HepG2 (cell line): ENCODE measurements at regions of chr2 and their contacts with region 1.

Region 1: DNA sequence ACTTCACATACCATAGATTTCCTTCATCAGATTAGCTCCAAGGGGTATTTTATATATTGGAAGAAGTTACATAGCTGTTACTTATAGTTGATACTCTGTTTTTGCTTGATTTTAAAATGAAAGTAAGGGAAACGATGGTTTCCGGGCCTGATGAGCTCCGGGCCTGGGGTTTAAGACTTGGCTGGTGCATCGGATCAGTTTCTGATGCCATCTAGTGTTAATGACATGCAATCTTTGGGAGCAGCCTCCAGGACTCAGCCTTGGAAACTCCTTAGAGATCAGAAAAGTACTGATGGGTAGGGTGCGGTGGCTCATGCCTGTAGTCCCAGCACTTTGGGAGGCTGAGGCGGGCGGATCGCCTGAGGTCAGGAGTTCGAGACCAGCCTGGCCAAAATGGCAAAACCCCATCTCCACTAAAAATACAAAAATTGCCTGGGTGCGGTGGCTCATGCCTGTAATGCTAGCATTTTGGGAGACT is 47.1 kb upstream of the CNOT11 start:
- DNase-seq: peak; percentile 83
- ATAC-seq: peak; percentile 72
- H3K4me3 ChIP-seq: peak overlapping the region; percentile 54 to 66 (median 55)
- H3K27ac ChIP-seq: peak overlapping the region; percentile 30
- H3K4me1 ChIP-seq: peaks cover 51% of the 10 kb centered on the region
- H3K27me3 ChIP-seq: no peaks in the 10 kb centered on the region
- CTCF ChIP-seq: peak; percentile 88
- EP300 ChIP-seq: no peak
- POLR2A ChIP-seq: no peak
- RAD21 ChIP-seq: peak; percentile 75

Region 2: DNA sequence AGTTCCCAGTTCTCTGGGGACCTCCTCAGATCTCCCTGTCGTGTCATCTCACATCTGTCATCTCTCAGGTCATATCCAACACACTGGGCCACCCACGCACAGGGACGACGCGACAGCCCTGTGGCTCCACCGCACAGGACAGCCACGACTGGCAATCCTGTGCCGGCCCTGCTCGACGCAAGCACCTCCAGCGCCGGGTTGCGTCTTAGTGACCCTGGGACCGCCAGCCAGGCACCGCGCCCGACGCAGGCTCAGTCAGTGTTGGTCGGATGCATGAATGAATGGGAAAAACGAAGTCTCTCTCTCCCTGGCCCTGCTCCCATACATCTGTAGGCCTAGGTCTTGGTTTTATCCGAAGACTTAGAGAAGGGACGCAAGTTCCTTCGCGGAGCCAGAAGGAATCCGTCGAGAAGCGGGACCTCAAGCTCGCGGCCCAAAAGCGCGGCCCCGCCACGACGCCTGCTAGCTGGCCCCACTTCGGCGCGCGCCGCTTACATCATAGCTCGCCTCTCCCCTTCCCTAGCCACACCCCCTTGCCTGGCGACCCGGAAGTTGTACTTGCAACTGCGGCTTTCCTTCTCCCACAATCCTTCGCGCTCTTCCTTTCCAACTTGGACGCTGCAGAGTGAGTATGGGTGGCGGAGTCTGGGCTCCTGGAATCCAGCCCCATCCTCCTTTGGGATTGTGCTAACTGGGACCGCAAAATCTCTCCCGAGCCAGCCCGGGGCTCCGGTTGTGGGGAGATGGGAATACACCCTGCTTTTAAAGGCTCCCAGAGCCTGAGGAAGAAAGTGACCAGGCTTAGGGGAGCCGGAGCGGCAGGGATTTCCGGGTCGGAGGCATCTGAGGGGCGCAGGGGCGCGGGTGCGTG is 203.6 kb before region 1 on chr2 and contains the start of gene RPL31:
- CTCF ChIA-PET with region 1: no interaction called
- POLR2A ChIA-PET with region 1: interaction called, 12 read pairs
- in situ Hi-C with region 1: no loop called
- intact Hi-C with region 1: no loop called
- DNase-seq: peak; percentile 98
- ATAC-seq: peak; percentile 91
- H3K4me3 ChIP-seq: peak within 1 kb of the TSS; percentile 81 to 96 (median 91)
- H3K27ac ChIP-seq: peak within 1 kb of the TSS; percentile 79
- H3K4me1 ChIP-seq: peaks cover 43% of the 10 kb centered on the region
- H3K27me3 ChIP-seq: no peaks in the 10 kb centered on the region; a peak in 1 of 5 replicates
- CTCF ChIP-seq: no peak; the same call in 1 of the 2 replicates
- EP300 ChIP-seq: peak; percentile 39 to 42; a peak in 2 of 4 replicates
- POLR2A ChIP-seq: peak; percentile 99 to 100
- RAD21 ChIP-seq: no peak; the same call in 1 of the 2 replicates
- total RNA-seq, gene RPL31: 3,331 and 4,246 TPM in 2 replicates

Region 3: GRCh38 chr2:101012706-101013181 is 192.8 kb before region 1 on chr2:
- CTCF ChIA-PET with region 1: interaction called, 6 read pairs
- POLR2A ChIA-PET with region 1: interaction called, 6 read pairs
- in situ Hi-C with region 1: no loop called
- intact Hi-C with region 1: loop called (anchors 5 kb)
- DNase-seq: peak; percentile 50
- ATAC-seq: no peak
- H3K4me3 ChIP-seq: no peak overlapping the region
- H3K27ac ChIP-seq: no peak overlapping the region
- H3K4me1 ChIP-seq: no peaks in the 10 kb centered on the region
- H3K27me3 ChIP-seq: no peaks in the 10 kb centered on the region
- CTCF ChIP-seq: peak; percentile 85
- EP300 ChIP-seq: no peak
- POLR2A ChIP-seq: no peak; a peak in 1 of 4 replicates
- RAD21 ChIP-seq: peak; percentile 82

Region 4: GRCh38 chr2:101036562-101037457 is 168.8 kb before region 1 on chr2:
- CTCF ChIA-PET with region 1: interaction called, 7 read pairs
- POLR2A ChIA-PET with region 1: no interaction called
- in situ Hi-C with region 1: no loop called
- intact Hi-C with region 1: loop called (anchors 1 kb)
- DNase-seq: peak; percentile 33
- ATAC-seq: no peak
- H3K4me3 ChIP-seq: no peak overlapping the region
- H3K27ac ChIP-seq: no peak overlapping the region
- H3K4me1 ChIP-seq: no peaks in the 10 kb centered on the region
- H3K27me3 ChIP-seq: no peaks in the 10 kb centered on the region
- CTCF ChIP-seq: peak; percentile 56
- EP300 ChIP-seq: no peak
- POLR2A ChIP-seq: no peak
- RAD21 ChIP-seq: peak; percentile 69

Region 5: DNA sequence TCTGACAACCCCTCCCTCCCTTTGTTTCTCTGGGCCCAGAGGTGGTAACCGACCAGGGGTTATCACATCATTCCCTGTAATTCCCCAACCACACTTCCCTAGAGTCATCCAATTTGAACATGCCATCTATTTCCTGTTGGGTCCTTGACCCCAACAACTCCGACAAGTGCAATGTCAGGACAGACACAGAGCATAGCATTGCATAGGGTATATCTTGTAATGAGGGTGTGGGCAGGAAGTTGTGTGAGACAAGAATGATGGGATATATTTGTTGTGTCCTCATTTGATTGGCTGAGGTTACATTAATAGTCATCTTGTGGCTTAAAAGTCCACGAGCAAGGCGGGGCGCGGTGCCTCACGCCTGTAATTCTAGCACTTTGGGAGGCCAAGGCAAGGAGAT is 13.7 kb after region 1 on chr2:
- CTCF ChIA-PET with region 1: interaction called, 4 read pairs
- POLR2A ChIA-PET with region 1: interaction called, 10 read pairs
- in situ Hi-C with region 1: no loop called
- intact Hi-C with region 1: no loop called
- DNase-seq: no peak
- ATAC-seq: no peak
- H3K4me3 ChIP-seq: no peak overlapping the region
- H3K27ac ChIP-seq: no peak overlapping the region
- H3K4me1 ChIP-seq: peaks cover 38% of the 10 kb centered on the region
- H3K27me3 ChIP-seq: no peaks in the 10 kb centered on the region
- CTCF ChIP-seq: no peak
- EP300 ChIP-seq: no peak
- POLR2A ChIP-seq: no peak
- RAD21 ChIP-seq: no peak

Region 6: GRCh38 chr2:101238930-101239759 is 33.6 kb after region 1 on chr2:
- CTCF ChIA-PET with region 1: no interaction called
- POLR2A ChIA-PET with region 1: interaction called, 10 read pairs
- in situ Hi-C with region 1: no loop called
- intact Hi-C with region 1: no loop called
- DNase-seq: peak; percentile 99
- ATAC-seq: peak; percentile 99
- H3K4me3 ChIP-seq: peak overlapping the region in 1 of 3 experiments; percentile 47; a peak in 2 of 6 replicates
- H3K27ac ChIP-seq: peak overlapping the region; percentile 98
- H3K4me1 ChIP-seq: peaks cover 81% of the 10 kb centered on the region
- H3K27me3 ChIP-seq: no peaks in the 10 kb centered on the region
- CTCF ChIP-seq: no peak; the same call in 1 of the 2 replicates
- EP300 ChIP-seq: peak in 1 of 2 experiments; percentile 76; a peak in 2 of 4 replicates
- POLR2A ChIP-seq: peak; percentile 57 to 77
- RAD21 ChIP-seq: no peak